HepG2 (cell line): ENCODE measurements at regions of chr11 and their contacts with region 1.

Region 1: GRCh38 chr11:102144357-102145342 is 34.4 kb downstream of the YAP1 start:
- DNase-seq: peak; percentile 60
- ATAC-seq: peak; percentile 65
- H3K4me3 ChIP-seq: no peak overlapping the region
- H3K27ac ChIP-seq: peak overlapping the region; percentile 58
- H3K4me1 ChIP-seq: peaks cover 75% of the 10 kb centered on the region
- H3K27me3 ChIP-seq: no peaks in the 10 kb centered on the region
- CTCF ChIP-seq: no peak
- EP300 ChIP-seq: no peak
- POLR2A ChIP-seq: no peak
- RAD21 ChIP-seq: no peak

Region 2: GRCh38 chr11:102187416-102188151 is 42.9 kb after region 1 on chr11:
- CTCF ChIA-PET with region 1: no interaction called
- POLR2A ChIA-PET with region 1: no interaction called
- in situ Hi-C with region 1: no loop called
- intact Hi-C with region 1: loop called (anchors 1 kb)
- DNase-seq: peak; percentile 41
- ATAC-seq: no peak
- H3K4me3 ChIP-seq: peak overlapping the region in 1 of 3 experiments; percentile 7; a peak in 1 of 6 replicates
- H3K27ac ChIP-seq: peak overlapping the region; percentile 72
- H3K4me1 ChIP-seq: peaks cover 87% of the 10 kb centered on the region
- H3K27me3 ChIP-seq: no peaks in the 10 kb centered on the region
- CTCF ChIP-seq: no peak
- EP300 ChIP-seq: peak in 1 of 2 experiments; percentile 21; a peak in 1 of 4 replicates
- POLR2A ChIP-seq: no peak
- RAD21 ChIP-seq: no peak